ENCODE measurements at regions of chr11 and their contacts with region 1.

Region 1: DNA sequence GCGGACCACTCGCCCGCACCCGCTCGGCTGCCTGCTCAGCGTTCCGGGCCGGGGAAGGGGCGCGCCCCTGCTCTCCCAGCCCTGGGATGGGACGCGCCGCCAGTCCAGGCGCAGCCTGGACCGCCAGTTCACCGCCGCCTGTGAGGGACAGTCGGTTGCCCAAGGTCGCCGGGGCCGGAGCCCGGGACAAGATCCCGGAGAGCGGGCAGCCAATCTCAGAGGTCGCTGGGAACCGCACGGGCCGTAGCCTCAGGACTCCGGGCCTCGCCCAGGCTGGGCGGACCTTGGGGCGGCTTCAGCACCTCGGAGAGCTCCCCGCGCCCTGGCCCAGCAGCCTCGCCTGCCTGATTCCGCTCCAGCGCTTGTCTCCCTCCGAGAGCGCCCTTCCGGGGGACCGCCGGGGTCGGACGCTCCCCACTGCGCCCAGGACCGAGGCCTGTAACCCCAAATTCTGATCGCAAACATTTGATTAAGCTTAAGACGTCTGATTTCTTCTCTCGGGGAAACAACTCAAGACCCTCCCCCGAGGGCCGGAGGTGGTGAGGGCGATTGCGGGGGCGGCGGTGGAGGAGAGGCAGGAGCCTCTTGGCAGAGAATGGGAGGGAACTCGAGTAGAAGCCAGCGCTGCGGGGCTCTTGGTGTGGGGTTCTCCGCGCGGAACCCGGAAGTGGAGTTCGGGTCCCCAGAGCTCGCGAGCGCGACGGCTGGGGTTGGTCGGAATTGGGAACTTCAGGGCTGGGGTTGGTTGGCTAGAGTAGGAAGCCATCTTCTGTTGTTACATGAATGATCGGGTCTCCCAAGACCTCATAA is 1.1 kb upstream of the CHRM4 start:
- DNase-seq: peak; percentile 82 to 86
- H3K4me3 ChIP-seq: peak overlapping the region in 1 of 3 donors; percentile 25
- H3K27ac ChIP-seq: no peak overlapping the region
- H3K4me1 ChIP-seq: peaks cover 19 to 39% of the 10 kb centered on the region in 2 donors
- H3K27me3 ChIP-seq: peaks cover 14% of the 10 kb centered on the region
- CTCF ChIP-seq: no peak
- POLR2A ChIP-seq: no peak

Region 2: DNA sequence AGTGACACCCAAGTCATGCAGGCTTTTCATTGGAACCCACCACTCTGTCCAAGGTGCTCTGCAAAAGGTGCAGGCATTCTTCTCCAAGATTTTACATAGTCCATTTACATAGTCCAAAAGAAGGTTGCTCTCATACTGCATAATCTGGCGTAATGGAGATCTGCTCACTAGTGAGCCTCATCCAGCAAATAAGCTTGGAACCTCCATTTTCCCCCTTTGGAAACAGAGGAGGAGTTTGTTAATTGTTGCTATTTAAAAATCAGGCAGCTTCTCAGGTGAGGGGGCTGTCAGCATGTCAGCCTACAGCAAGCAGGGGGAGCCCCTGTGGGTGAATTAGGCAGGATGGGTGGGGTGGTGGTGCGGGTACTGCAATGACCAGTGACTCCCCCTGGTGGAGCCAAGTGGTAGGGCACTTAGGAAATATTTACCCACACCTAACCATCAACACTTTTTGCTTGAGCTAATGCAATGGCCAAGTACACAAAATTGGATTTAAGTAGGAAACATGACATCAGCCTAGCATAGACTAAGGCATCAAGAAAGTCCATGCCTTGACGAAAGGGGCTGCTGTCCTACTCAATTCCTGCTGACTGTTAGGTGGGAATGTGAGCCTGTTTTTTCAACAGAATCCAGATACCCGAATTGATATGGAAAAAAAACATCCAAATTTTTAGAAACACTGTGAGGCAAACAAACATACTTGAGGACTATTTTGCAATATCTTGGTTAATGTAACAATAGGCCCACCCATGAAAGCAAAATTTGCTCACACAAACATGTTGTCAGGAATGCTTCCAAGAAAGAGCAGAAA is 136.7 kb after region 1 on chr11:
- intact Hi-C with region 1: loop called (anchors 5 kb)
- DNase-seq: peak; percentile 58 to 59
- H3K4me3 ChIP-seq: no peak overlapping the region
- H3K27ac ChIP-seq: no peak overlapping the region
- H3K4me1 ChIP-seq: peaks cover 0 to 14% of the 10 kb centered on the region in 2 donors
- H3K27me3 ChIP-seq: no peaks in the 10 kb centered on the region
- CTCF ChIP-seq: peak; percentile 66 to 94 (median 72)
- POLR2A ChIP-seq: no peak